ENCODE measurements at regions of chr1 and their contacts with region 1.

Region 1: GRCh38 chr1:150578965-150579798 is at the start of gene MCL1:
- DNase-seq: peak; percentile 66 to 94 (median 88)
- ATAC-seq: peak; percentile 69
- H3K4me3 ChIP-seq: peak within 1 kb of the TSS; percentile 88 to 94
- H3K4me3 Mint-ChIP-seq: peak within 1 kb of the TSS; percentile 96
- H3K27ac ChIP-seq: peak within 1 kb of the TSS; percentile 90 to 97
- H3K27ac Mint-ChIP-seq: peak within 1 kb of the TSS; percentile 98
- H3K4me1 ChIP-seq: peaks cover 7% of the 10 kb centered on the region
- H3K4me1 Mint-ChIP-seq: peaks cover 37% of the 10 kb centered on the region
- H3K27me3 ChIP-seq: no peaks in the 10 kb centered on the region
- H3K27me3 Mint-ChIP-seq: no peaks in the 10 kb centered on the region
- CTCF ChIP-seq: no peak
- total RNA-seq, gene MCL1: 682 to 685 TPM

Region 2: DNA sequence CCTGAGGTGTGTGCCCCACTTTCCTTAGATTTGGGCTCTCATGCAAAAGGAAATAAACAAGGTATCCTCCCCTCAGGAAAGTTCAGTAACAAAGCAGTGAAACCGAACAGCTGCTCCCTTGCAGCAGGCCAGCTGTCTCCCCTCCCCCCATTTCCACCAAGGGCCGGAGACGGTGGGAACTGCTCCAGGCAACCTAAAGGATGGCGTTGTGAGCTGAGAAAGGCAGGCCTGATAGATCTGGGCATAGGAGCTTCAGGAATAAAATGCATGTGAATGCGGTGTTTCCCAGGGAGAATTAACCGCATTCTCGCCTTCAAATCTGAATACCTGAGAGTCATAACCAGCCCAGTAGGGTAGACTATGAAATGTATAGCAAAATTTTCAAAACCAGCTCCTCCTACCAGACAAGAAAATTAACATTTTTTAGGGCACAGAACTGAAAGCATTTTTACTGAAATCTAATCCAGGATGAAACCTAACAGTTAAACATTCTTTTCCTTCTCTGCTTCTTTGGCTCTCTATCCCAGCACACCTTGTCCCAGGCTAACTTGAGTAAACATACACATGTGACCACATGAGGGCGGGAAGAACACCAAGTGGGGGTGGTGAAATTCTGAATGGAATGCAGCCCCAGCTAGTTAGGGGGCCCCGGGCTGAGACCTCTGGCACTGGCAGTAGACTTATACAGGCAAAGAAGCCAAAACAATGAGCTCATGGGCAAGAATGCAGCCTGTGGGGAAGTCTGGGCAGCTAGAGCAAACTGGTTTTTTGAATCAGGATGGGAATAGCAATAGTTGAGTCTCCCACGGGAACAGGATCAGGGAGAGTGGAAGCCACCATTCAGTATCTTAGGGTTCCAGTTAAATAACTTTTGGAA is 11.2 kb before region 1 on chr1:
- CTCF ChIA-PET with region 1: interaction called, 349 read pairs
- POLR2A ChIA-PET with region 1: interaction called, 584 read pairs
- intact Hi-C with region 1: loop called in 1 of 2 experiments (anchors 1 kb)
- DNase-seq: peak in 6 of 9 experiments; percentile 42 to 67 (median 52)
- ATAC-seq: peak; percentile 11
- H3K4me3 ChIP-seq: peak overlapping the region; percentile 51 to 59
- H3K4me3 Mint-ChIP-seq: peak overlapping the region; percentile 80
- H3K27ac ChIP-seq: peak overlapping the region; percentile 53 to 94
- H3K27ac Mint-ChIP-seq: peak overlapping the region; percentile 98
- H3K4me1 ChIP-seq: peaks cover 98% of the 10 kb centered on the region
- H3K4me1 Mint-ChIP-seq: peaks cover 87% of the 10 kb centered on the region
- H3K27me3 ChIP-seq: no peaks in the 10 kb centered on the region
- H3K27me3 Mint-ChIP-seq: no peaks in the 10 kb centered on the region
- CTCF ChIP-seq: no peak

Region 3: GRCh38 chr1:150613061-150613920 is 34.1 kb after region 1 on chr1:
- CTCF ChIA-PET with region 1: interaction called, 799 read pairs
- POLR2A ChIA-PET with region 1: interaction called, 10 read pairs
- intact Hi-C with region 1: loop called (anchors 1 kb)
- DNase-seq: peak in 6 of 9 experiments; percentile 22 to 89 (median 60)
- ATAC-seq: peak; percentile 32
- H3K4me3 ChIP-seq: no peak overlapping the region
- H3K4me3 Mint-ChIP-seq: peak overlapping the region; percentile 9
- H3K27ac ChIP-seq: peak overlapping the region in 1 of 2 experiments; percentile 95
- H3K27ac Mint-ChIP-seq: peak overlapping the region; percentile 83
- H3K4me1 ChIP-seq: peaks cover 33% of the 10 kb centered on the region
- H3K4me1 Mint-ChIP-seq: peaks cover 55% of the 10 kb centered on the region
- H3K27me3 ChIP-seq: no peaks in the 10 kb centered on the region
- H3K27me3 Mint-ChIP-seq: no peaks in the 10 kb centered on the region
- CTCF ChIP-seq: no peak

Region 4: DNA sequence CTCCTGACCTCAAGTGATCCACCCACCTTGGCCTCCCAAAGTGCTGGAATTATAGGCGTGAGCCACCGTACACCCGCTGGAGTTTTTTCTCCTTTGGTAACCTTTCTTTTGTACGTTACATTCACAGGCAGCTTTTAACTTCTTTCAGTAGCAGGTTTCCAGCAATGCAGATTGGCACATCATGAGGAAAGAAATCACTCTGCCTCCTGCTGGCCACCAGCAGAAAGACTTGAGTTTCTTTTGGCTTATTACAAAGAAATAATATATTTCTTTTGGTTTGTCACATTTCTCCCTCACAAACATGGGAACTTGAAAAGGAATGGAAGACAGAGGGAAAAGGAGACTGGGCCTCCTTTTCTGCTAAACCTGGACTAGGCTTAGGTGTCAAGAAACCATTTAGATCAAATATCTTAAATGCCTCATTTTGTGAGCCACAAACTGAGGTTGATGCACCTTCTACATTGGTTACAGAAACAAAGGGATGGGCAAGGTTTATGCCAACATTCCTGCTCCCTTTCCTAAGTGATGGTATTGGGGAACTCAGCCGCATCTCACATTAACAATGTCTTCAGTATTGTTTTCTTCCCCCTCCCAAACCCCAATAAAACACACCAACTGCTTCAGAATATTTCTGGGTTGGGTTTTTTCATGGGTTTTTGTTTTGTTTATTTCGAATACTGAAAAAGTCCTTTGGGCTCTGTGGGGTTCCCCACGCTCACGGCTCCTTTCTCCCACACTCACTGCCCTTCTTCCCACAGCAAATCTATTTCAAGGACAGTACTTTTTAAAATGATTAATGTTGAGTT is 42.5 kb after region 1 on chr1:
- CTCF ChIA-PET with region 1: interaction called, 799 read pairs
- POLR2A ChIA-PET with region 1: interaction called, 35 read pairs
- intact Hi-C with region 1: loop called (anchors 2 kb)
- DNase-seq: peak in 8 of 9 experiments; percentile 23 to 84 (median 68)
- ATAC-seq: peak; percentile 80
- H3K4me3 ChIP-seq: no peak overlapping the region
- H3K4me3 Mint-ChIP-seq: no peak overlapping the region
- H3K27ac ChIP-seq: peak overlapping the region in 1 of 2 experiments; percentile 62
- H3K27ac Mint-ChIP-seq: peak overlapping the region; percentile 80
- H3K4me1 ChIP-seq: peaks cover 19% of the 10 kb centered on the region
- H3K4me1 Mint-ChIP-seq: peaks cover 34% of the 10 kb centered on the region
- H3K27me3 ChIP-seq: no peaks in the 10 kb centered on the region
- H3K27me3 Mint-ChIP-seq: no peaks in the 10 kb centered on the region
- CTCF ChIP-seq: peak; percentile 74

Region 5: GRCh38 chr1:150696590-150697524 is 117.7 kb after region 1 on chr1 and contains the start of gene GOLPH3L:
- CTCF ChIA-PET with region 1: no interaction called
- POLR2A ChIA-PET with region 1: interaction called, 12 read pairs
- intact Hi-C with region 1: no loop called
- DNase-seq: peak; percentile 76 to 97 (median 88)
- ATAC-seq: peak; percentile 98
- H3K4me3 ChIP-seq: peak within 1 kb of the TSS; percentile 81 to 88
- H3K4me3 Mint-ChIP-seq: peak within 1 kb of the TSS; percentile 98
- H3K27ac ChIP-seq: peak within 1 kb of the TSS; percentile 70 to 81
- H3K27ac Mint-ChIP-seq: peak within 1 kb of the TSS; percentile 92
- H3K4me1 ChIP-seq: peaks cover 7% of the 10 kb centered on the region
- H3K4me1 Mint-ChIP-seq: peaks cover 38% of the 10 kb centered on the region
- H3K27me3 ChIP-seq: no peaks in the 10 kb centered on the region
- H3K27me3 Mint-ChIP-seq: peaks cover 2% of the 10 kb centered on the region
- CTCF ChIP-seq: no peak
- total RNA-seq, gene GOLPH3L: 1.6 to 1.8 TPM